Psoas muscle (tissue), 8 donors: ENCODE measurements at regions of chr7 and their contacts with region 1.

Region 1: DNA sequence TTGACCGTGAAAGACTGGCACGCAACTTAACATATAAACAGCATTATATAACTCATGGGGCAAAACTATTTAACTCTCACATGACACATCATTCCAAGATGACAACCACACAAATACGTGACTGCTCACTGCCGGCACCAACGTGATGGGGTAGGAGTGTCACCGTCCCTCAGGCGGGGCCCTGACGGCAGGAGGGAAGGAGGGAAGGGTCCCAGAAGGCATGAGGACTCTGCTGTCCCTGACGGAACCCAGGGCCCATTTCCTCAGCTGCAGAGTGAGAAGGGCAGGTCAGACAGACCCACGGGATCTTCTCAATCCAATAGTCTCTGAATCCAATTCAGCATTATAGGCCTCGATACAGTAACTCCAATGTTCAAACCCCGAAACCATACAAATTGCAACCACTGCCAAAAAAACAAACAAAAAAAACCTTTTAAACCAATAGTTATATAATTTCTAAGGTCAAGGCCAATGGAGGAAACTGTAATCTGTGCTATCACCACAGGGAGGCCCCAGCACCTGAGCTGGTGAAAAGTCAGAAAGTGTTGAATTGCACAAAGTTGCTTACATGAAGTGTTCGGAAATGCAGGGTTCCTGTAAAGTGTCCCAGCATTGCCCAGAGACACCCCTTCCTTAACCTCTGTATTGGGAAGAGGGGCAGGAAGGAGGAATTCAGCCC is 137.4 kb downstream of the TNS3 start:
- DNase-seq: no peak
- ATAC-seq: peak in 1 of 4 donors; percentile 48
- H3K4me3 ChIP-seq: no peak overlapping the region
- H3K27ac ChIP-seq: peak overlapping the region; percentile 94
- H3K4me1 ChIP-seq: peaks cover 48% of the 10 kb centered on the region
- H3K27me3 ChIP-seq: no peaks in the 10 kb centered on the region
- CTCF ChIP-seq: peak; percentile 52

Region 2: DNA sequence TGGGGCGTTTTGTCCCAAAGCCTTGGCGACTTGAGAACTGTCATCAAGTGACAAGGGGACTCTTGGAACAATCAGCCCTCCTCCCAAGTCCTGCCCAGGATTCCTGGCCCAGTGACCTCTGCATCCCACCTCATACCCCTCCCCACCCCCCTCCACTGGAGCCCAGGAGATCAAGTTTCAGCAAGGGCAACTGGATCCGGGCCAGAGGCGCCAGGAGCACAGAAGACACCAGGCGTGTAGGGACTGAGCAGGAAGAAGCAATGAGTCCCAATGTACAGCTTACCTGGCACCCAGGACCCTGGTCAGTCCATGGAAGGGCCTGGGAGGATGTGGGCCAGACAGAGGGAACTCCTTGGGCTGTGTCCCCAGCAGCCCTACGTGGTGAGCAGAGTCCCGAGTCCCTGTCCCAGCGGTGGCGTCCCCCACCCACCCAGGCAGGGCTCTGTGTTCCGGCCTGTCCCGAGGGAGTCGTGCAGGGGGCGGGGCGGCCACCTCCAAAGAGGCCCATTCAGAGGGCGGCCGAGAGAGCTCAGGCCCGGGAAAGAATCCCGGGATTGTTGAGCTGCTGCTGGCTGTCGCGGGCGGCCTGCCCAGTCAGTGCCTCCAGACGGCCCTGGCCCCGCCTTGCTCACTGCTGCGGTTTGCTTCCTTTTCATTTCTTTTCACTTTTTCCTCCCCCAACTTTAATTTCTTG is 116.7 kb before region 1 on chr7:
- intact Hi-C with region 1: no loop called
- DNase-seq: peak; percentile 83 to 90
- ATAC-seq: peak; percentile 74 to 85 (median 82)
- H3K4me3 ChIP-seq: peak overlapping the region; percentile 41
- H3K27ac ChIP-seq: peak overlapping the region; percentile 61
- H3K4me1 ChIP-seq: peaks cover 44% of the 10 kb centered on the region
- H3K27me3 ChIP-seq: no peaks in the 10 kb centered on the region
- CTCF ChIP-seq: no peak

Region 3: GRCh38 chr7:47482013-47482875 is 37.7 kb after region 1 on chr7:
- intact Hi-C with region 1: loop called (anchors 5 kb)
- DNase-seq: peak in 1 of 2 donors; percentile 70
- ATAC-seq: peak; percentile 86 to 93 (median 90)
- H3K4me3 ChIP-seq: no peak overlapping the region
- H3K27ac ChIP-seq: peak overlapping the region; percentile 84
- H3K4me1 ChIP-seq: peaks cover 36% of the 10 kb centered on the region
- H3K27me3 ChIP-seq: no peaks in the 10 kb centered on the region
- CTCF ChIP-seq: no peak

Region 4: GRCh38 chr7:47571331-47572093 is 127.0 kb after region 1 on chr7:
- intact Hi-C with region 1: loop called in 1 of 2 experiments (anchors 10 kb)
- DNase-seq: peak; percentile 84 to 86
- ATAC-seq: peak; percentile 71 to 76 (median 72)
- H3K4me3 ChIP-seq: peak overlapping the region; percentile 33
- H3K27ac ChIP-seq: peak overlapping the region; percentile 58
- H3K4me1 ChIP-seq: peaks cover 30% of the 10 kb centered on the region
- H3K27me3 ChIP-seq: peaks cover 0 to 2% (median 0%) of the 10 kb centered on the region in 3 donors
- CTCF ChIP-seq: no peak

Region 5: GRCh38 chr7:47581806-47582763 is 137.6 kb after region 1 on chr7 and contains the start of gene TNS3:
- intact Hi-C with region 1: loop called (anchors 5 to 10 kb)
- DNase-seq: peak; percentile 58 to 65
- ATAC-seq: peak; percentile 63 to 81 (median 74)
- H3K4me3 ChIP-seq: peak within 1 kb of the TSS; percentile 73
- H3K27ac ChIP-seq: peak within 1 kb of the TSS; percentile 21
- H3K4me1 ChIP-seq: peaks cover 17% of the 10 kb centered on the region
- H3K27me3 ChIP-seq: no peaks in the 10 kb centered on the region
- CTCF ChIP-seq: peak; percentile 25
- total RNA-seq, gene TNS3: 35.0 to 75.3 (median 45.6) TPM

Region 6: GRCh38 chr7:47677667-47678111 is 233.2 kb after region 1 on chr7:
- intact Hi-C with region 1: no loop called
- DNase-seq: no peak
- ATAC-seq: no peak
- H3K4me3 ChIP-seq: no peak overlapping the region
- H3K27ac ChIP-seq: no peak overlapping the region
- H3K4me1 ChIP-seq: no peaks in the 10 kb centered on the region
- H3K27me3 ChIP-seq: no peaks in the 10 kb centered on the region
- CTCF ChIP-seq: no peak